Vagina (tissue), 2 donors: ENCODE measurements at regions of chr7 and their contacts with region 1.

Region 1: GRCh38 chr7:691368-692040 is 35.0 kb upstream of the DNAAF5 start:
- DNase-seq: no peak
- H3K4me3 ChIP-seq: no peak overlapping the region
- H3K27ac ChIP-seq: no peak overlapping the region
- H3K4me1 ChIP-seq: no peaks in the 10 kb centered on the region
- H3K27me3 ChIP-seq: no peaks in the 10 kb centered on the region
- CTCF ChIP-seq: no peak
- POLR2A ChIP-seq: no peak

Region 2: DNA sequence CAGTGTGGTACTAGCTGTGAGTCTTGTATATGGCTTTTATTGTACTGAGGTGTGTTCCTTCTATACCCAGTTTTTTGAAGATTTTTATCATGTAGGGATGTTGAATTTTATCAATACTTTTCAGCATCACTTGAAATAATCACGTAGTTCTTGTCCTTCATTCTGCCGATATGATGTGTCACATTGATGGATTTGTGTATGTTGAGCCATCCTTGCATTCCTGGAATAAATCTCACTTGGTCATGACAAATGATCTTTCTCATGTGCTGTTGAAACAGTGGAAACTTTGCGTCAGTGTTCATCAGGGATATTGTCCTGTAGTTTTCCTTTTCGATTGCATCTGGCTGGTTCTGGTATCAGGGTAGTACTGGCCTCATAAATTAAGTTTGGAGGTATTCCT is 42.7 kb after region 1 on chr7:
- intact Hi-C with region 1: loop called (anchors 1 kb)
- DNase-seq: no peak
- H3K4me3 ChIP-seq: no peak overlapping the region
- H3K27ac ChIP-seq: no peak overlapping the region
- H3K4me1 ChIP-seq: peaks cover 8% of the 10 kb centered on the region
- H3K27me3 ChIP-seq: no peaks in the 10 kb centered on the region
- CTCF ChIP-seq: no peak
- POLR2A ChIP-seq: no peak